ENCODE measurements at regions of chr21 and their contacts with region 1.

Region 1: DNA sequence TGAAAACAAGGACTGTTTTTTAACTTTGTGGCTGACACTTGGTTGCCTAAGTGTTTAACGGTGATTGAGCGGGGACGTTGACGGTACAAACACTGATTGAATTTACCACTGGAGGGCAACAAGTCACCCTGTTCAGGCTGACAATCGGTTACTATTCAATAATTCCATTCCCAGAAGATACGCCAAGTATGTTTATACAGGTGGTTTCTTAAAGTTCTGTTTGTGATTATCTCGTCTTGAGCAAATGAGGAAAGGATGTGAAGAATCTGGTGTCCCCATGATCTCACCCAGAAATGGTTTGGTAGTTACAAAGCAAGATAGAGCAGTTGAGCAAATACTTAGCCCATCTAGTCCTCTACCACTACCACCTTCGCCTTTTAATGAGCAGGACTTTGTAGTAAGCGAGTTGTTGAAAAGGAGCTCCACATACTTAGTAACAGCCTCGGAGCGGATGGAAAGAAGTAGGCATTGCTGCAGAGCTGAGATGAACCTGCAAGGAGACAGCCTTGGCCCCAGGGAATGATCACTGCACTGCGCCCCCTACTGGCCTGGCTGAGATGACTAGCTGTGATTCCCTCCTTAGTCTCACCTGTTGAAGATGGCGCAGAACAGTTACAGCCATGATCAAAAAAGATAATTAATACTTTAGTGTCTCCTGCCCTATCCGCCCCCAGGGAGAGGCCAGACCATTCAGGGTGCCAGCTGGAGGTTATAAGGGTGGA is 36.3 kb downstream of the IFNAR1 start:
- DNase-seq: peak; percentile 80 to 93 (median 88)
- ATAC-seq: peak; percentile 68
- H3K4me3 ChIP-seq: peak overlapping the region; percentile 44
- H3K4me3 Mint-ChIP-seq: peak overlapping the region; percentile 90
- H3K27ac ChIP-seq: peak overlapping the region; percentile 66 to 79
- H3K27ac Mint-ChIP-seq: peak overlapping the region; percentile 88
- H3K4me1 ChIP-seq: peaks cover 17% of the 10 kb centered on the region
- H3K4me1 Mint-ChIP-seq: peaks cover 26% of the 10 kb centered on the region
- H3K27me3 ChIP-seq: no peaks in the 10 kb centered on the region
- H3K27me3 Mint-ChIP-seq: no peaks in the 10 kb centered on the region
- CTCF ChIP-seq: peak; percentile 88

Region 2: DNA sequence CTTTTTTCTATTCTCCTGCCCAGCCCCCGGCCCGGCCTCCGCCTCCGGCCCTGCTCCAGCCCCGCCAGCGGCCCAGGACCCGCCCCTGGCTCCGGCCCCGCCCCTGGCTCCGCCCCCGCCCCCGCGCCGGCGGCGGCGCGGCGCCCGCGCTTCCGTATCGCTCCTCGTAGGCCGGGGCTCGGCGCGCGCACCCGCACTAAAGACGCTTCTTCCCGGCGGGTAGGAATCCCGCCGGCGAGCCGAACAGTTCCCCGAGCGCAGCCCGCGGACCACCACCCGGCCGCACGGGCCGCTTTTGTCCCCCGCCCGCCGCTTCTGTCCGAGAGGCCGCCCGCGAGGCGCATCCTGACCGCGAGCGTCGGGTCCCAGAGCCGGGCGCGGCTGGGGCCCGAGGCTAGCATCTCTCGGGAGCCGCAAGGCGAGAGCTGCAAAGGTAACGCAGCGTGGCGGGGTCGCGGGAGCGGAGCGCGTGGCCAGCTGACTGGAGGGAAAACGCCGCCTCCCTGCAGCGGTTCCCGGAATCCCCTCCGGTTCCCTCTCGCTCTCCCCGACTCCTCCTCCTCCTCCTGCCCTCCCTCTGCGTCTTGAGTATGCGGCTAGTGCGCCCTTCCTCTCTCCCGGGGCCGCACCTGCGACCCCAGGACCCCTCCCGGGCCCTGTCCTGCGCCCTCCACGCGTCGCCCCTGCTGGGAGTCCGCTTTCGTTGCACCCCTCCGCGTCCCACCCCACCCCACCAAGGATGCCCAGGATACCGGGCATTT is 131.1 kb before region 1 on chr21 and contains the start of gene IFNAR2:
- CTCF ChIA-PET with region 1: interaction called, 3 read pairs
- POLR2A ChIA-PET with region 1: interaction called, 13 read pairs
- intact Hi-C with region 1: loop called in 1 of 2 experiments (anchors 10 kb)
- DNase-seq: peak; percentile 51 to 86 (median 71)
- ATAC-seq: peak; percentile 85
- H3K4me3 ChIP-seq: peak within 1 kb of the TSS; percentile 87
- H3K4me3 Mint-ChIP-seq: peak within 1 kb of the TSS; percentile 96
- H3K27ac ChIP-seq: peak within 1 kb of the TSS; percentile 60 to 87
- H3K27ac Mint-ChIP-seq: peak within 1 kb of the TSS; percentile 90
- H3K4me1 ChIP-seq: peaks cover 24% of the 10 kb centered on the region
- H3K4me1 Mint-ChIP-seq: peaks cover 48% of the 10 kb centered on the region
- H3K27me3 ChIP-seq: no peaks in the 10 kb centered on the region
- H3K27me3 Mint-ChIP-seq: no peaks in the 10 kb centered on the region
- CTCF ChIP-seq: no peak
- total RNA-seq, gene IFNAR2: 26.6 to 28.2 TPM

Region 3: GRCh38 chr21:33299181-33299752 is 61.8 kb before region 1 on chr21:
- CTCF ChIA-PET with region 1: interaction called, 3 read pairs
- POLR2A ChIA-PET with region 1: interaction called, 18 read pairs
- intact Hi-C with region 1: no loop called
- DNase-seq: peak in 13 of 14 experiments; percentile 9 to 76 (median 36)
- ATAC-seq: peak; percentile 97
- H3K4me3 ChIP-seq: peak overlapping the region; percentile 6
- H3K4me3 Mint-ChIP-seq: peak overlapping the region; percentile 66
- H3K27ac ChIP-seq: peak overlapping the region; percentile 23 to 69
- H3K27ac Mint-ChIP-seq: peak overlapping the region; percentile 86
- H3K4me1 ChIP-seq: peaks cover 39% of the 10 kb centered on the region
- H3K4me1 Mint-ChIP-seq: peaks cover 53% of the 10 kb centered on the region
- H3K27me3 ChIP-seq: no peaks in the 10 kb centered on the region
- H3K27me3 Mint-ChIP-seq: no peaks in the 10 kb centered on the region
- CTCF ChIP-seq: no peak

Region 4: GRCh38 chr21:33332143-33332542 is 28.9 kb before region 1 on chr21:
- CTCF ChIA-PET with region 1: interaction called, 12 read pairs
- POLR2A ChIA-PET with region 1: interaction called, 23 read pairs
- intact Hi-C with region 1: loop called in 1 of 2 experiments (anchors 5 kb)
- DNase-seq: peak in 2 of 14 experiments; percentile 13 to 40
- ATAC-seq: peak; percentile 43
- H3K4me3 ChIP-seq: no peak overlapping the region
- H3K4me3 Mint-ChIP-seq: no peak overlapping the region
- H3K27ac ChIP-seq: peak overlapping the region in 1 of 2 donors; percentile 23
- H3K27ac Mint-ChIP-seq: peak overlapping the region; percentile 62
- H3K4me1 ChIP-seq: peaks cover 33% of the 10 kb centered on the region
- H3K4me1 Mint-ChIP-seq: peaks cover 61% of the 10 kb centered on the region
- H3K27me3 ChIP-seq: no peaks in the 10 kb centered on the region
- H3K27me3 Mint-ChIP-seq: no peaks in the 10 kb centered on the region
- CTCF ChIP-seq: no peak

Region 5: DNA sequence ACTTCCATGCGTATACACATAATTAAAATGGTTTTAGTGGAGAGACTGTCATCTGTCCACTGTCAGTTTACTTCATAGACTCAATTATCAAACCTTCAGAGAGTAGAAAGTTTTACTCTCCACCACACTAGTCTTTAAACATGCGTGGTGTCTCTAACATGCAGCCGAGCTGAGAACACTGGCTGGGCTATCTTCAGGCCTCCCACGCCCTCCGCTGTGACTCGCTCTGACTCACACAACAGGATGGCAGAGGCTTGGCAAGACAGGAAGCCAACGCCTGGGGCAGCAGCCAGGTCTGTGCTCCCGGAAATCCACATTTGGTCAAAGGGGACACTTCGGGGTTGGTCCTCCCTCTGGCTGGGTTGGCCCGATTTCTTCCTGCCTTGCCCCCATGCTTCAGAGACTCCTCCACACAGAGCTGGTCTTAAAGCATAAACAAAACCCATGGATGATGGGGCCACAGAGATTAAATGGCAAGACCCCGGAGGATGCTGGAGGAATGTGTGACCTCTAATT is 19.5 kb after region 1 on chr21:
- CTCF ChIA-PET with region 1: interaction called, 34 read pairs
- POLR2A ChIA-PET with region 1: interaction called, 51 read pairs
- intact Hi-C with region 1: loop called in 1 of 2 experiments (anchors 1 kb)
- DNase-seq: peak; percentile 49 to 93 (median 80)
- ATAC-seq: peak; percentile 76
- H3K4me3 ChIP-seq: no peak overlapping the region
- H3K4me3 Mint-ChIP-seq: peak overlapping the region; percentile 81
- H3K27ac ChIP-seq: peak overlapping the region; percentile 22 to 74
- H3K27ac Mint-ChIP-seq: peak overlapping the region; percentile 95
- H3K4me1 ChIP-seq: peaks cover 63% of the 10 kb centered on the region
- H3K4me1 Mint-ChIP-seq: peaks cover 60% of the 10 kb centered on the region
- H3K27me3 ChIP-seq: no peaks in the 10 kb centered on the region
- H3K27me3 Mint-ChIP-seq: no peaks in the 10 kb centered on the region
- CTCF ChIP-seq: no peak

Region 6: GRCh38 chr21:33403779-33404585 is 42.9 kb after region 1 on chr21:
- CTCF ChIA-PET with region 1: interaction called, 19 read pairs
- POLR2A ChIA-PET with region 1: interaction called, 28 read pairs
- intact Hi-C with region 1: loop called (anchors 2 to 5 kb)
- DNase-seq: peak in 10 of 14 experiments; percentile 8 to 45 (median 32)
- ATAC-seq: peak; percentile 33
- H3K4me3 ChIP-seq: peak overlapping the region; percentile 82
- H3K4me3 Mint-ChIP-seq: peak overlapping the region; percentile 96
- H3K27ac ChIP-seq: peak overlapping the region in 1 of 2 donors; percentile 65
- H3K27ac Mint-ChIP-seq: peak overlapping the region; percentile 84
- H3K4me1 ChIP-seq: peaks cover 38% of the 10 kb centered on the region
- H3K4me1 Mint-ChIP-seq: peaks cover 47% of the 10 kb centered on the region
- H3K27me3 ChIP-seq: no peaks in the 10 kb centered on the region
- H3K27me3 Mint-ChIP-seq: no peaks in the 10 kb centered on the region
- CTCF ChIP-seq: no peak

Region 7: DNA sequence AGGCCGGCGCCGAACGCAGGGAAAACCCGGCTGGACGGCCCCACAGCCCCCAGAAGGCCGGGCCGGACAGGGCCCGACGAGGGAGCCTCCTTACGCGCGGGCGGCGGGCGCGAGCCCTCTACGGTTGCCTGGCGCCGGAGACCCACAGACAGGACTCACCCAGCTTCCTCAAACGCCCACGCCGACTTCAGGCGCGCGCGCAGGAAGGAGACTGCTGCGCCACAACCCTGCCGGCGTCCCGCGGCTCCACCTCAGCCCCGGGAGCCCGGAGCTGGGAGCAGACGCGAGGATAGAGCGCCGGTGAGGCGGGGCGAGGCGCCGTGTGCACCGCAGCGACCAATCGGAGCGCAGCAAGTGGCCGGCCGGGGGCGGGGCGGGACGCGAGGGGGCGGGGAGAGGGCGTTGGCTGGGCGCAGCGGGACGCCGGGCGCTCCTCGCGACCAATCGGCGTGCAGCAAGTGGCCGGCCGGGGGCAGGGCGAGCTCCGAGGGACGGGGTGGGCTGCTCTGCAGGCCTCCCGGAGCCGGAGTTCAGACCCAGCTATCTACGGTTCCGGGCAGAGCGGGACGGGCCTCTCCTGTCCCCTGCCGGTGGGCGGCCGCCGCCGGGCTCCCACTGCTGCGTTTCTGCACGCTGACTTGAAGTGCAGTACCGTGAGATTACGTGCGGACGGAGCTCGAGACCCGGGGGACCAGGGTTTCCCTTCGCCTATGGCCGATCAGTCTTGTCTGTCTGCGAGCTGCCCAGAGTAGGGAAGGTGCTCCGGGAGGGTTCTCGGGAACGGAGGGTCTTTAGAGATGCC is 118.8 kb after region 1 on chr21 and contains the start of gene TMEM50B:
- CTCF ChIA-PET with region 1: interaction called, 8 read pairs
- POLR2A ChIA-PET with region 1: interaction called, 27 read pairs
- intact Hi-C with region 1: no loop called
- DNase-seq: peak; percentile 91 to 99 (median 96)
- ATAC-seq: peak; percentile 89
- H3K4me3 ChIP-seq: peak within 1 kb of the TSS; percentile 88
- H3K4me3 Mint-ChIP-seq: peak within 1 kb of the TSS; percentile 89
- H3K27ac ChIP-seq: peak within 1 kb of the TSS; percentile 80 to 90
- H3K27ac Mint-ChIP-seq: peak within 1 kb of the TSS; percentile 96
- H3K4me1 ChIP-seq: peaks cover 22% of the 10 kb centered on the region
- H3K4me1 Mint-ChIP-seq: peaks cover 19% of the 10 kb centered on the region
- H3K27me3 ChIP-seq: no peaks in the 10 kb centered on the region
- H3K27me3 Mint-ChIP-seq: no peaks in the 10 kb centered on the region
- CTCF ChIP-seq: peak; percentile 0
- total RNA-seq, gene TMEM50B: 38.4 to 40.3 TPM